Uterus (tissue), 4 donors: ENCODE measurements at regions of chr1 and their contacts with region 1.

Region 1: DNA sequence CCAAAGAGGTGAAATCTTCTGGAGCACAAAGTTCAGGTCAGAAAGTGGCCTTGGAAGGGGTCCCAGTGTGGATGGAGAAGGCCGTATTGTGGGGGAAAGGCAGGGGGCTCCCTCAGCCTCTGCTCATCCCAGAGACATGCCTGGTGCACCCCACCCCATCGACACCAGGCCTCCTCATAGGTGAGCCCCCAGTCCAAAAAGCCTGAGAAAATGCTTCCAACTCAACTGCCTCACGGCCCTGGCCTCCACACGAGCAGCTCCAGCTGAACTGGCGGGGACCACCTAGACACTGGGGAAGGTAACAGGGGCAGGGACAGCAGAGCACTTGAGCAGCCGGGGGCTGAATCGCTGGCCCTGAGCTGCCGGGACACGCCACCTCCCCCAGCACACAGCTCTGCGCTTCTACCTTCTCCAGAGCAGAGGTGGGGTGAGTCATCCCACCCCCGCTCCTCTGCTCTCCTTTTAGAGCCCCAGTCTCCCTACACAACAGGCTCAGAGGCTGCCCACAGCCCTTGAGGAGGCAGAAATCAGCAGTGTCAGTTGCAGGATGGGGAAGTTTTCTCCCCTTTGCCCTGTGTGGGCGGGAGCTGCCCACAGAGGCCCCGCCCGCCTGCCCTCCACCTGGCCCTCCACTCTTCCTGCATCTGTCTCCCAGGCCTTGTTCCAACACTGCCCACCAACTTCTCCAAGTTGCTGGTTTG is 94.5 kb downstream of the STUM start:
- DNase-seq: peak; percentile 62 to 71
- H3K4me3 ChIP-seq: no peak overlapping the region
- H3K27ac ChIP-seq: peak overlapping the region; percentile 73 to 83
- H3K4me1 ChIP-seq: peaks cover 0 to 14% of the 10 kb centered on the region in 2 donors
- H3K27me3 ChIP-seq: no peaks in the 10 kb centered on the region
- CTCF ChIP-seq: no peak
- POLR2A ChIP-seq: no peak

Region 2: GRCh38 chr1:226736908-226737818 is 94.1 kb after region 1 on chr1:
- intact Hi-C with region 1: loop called (anchors 5 kb)
- DNase-seq: peak in 1 of 2 donors; percentile 48
- H3K4me3 ChIP-seq: peak overlapping the region; percentile 83 to 87
- H3K27ac ChIP-seq: peak overlapping the region; percentile 97 to 98
- H3K4me1 ChIP-seq: peaks cover 4 to 11% of the 10 kb centered on the region in 2 donors
- H3K27me3 ChIP-seq: no peaks in the 10 kb centered on the region
- CTCF ChIP-seq: peak in 2 of 4 experiments; percentile 9 to 28
- POLR2A ChIP-seq: no peak